Right ventricle myocardium inferior (tissue), 1 donor: ENCODE measurements at regions of chr5 and their contacts with region 1.

Region 1: GRCh38 chr5:42994246-42995151 is 45.6 kb downstream of the ANXA2R start:
- DNase-seq: peak; percentile 90
- ATAC-seq: peak; percentile 78

Region 2: GRCh38 chr5:42950440-42951292 is 43.8 kb before region 1 on chr5:
- intact Hi-C with region 1: loop called (anchors 2 kb)
- DNase-seq: peak; percentile 73
- ATAC-seq: peak; percentile 77

Region 3: DNA sequence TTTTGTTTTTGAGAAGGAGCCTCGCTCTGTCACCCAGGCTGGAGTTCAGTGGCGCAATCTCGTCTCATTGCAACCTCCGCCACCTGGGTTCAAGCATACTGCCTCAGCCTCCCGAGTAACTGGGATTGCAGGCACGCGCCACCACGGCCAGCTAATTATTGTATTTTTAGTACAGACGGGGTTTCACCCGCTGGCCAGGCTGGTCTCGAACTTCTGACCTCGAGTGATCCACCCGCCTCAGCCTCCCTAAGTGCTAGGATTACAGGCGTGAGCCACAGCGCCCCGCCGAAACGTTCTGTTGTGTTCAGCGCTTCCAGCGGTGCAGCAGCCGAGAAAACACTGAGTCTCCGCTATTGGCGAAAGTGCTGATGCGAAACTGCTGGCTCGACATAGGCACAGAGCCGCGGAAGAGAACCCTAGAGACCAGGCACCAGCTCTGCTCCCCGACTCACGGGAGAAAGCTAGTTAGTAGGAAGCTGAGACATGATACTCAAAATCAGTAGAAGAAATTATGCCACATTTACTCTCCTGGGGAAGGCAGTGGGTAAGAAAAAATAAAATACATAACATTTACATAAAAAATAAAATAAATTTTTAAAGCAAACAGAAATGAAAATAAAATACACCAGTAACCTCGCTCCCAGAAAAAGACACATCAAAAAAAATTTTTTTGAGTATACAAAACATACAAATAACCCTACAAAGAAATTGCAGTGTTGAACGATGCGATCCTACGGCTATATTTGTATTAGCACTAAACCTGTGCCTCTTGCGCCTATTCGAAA is 14.1 kb after region 1 on chr5:
- intact Hi-C with region 1: loop called (anchors 2 kb)
- DNase-seq: peak; percentile 91
- ATAC-seq: peak; percentile 87

Region 4: DNA sequence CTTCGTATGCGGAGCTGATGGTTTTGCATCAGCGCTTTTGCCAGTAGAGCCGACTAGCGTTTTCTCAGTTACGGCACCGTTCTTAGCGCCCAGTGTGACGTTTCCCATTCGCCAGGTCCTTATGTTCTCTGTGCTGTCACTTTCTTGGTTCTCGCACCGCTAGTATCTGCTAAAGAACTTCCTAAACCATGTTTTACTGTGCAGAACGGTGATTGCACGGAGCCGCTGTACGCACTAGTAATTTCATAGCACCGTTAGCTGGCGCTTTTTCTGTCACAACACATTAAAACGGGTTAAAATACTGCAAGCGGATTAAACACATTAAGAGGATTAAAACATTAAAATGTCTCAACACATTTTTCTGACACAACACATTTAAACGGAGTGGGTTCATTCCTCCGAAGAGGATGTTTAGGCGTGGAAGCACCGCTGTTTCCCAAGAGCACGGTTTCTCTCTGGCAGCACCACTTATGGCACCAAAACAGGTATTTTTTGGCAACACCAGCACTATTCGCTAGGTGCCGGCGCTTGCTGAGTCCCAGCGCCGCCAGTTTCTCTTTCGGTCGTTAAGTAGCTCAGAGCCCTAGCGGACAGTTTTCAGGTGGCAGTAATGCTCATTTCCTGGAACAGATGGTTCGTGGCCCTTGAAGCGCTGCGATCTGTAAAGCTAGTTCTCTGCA is 25.3 kb after region 1 on chr5:
- intact Hi-C with region 1: loop called (anchors 2 kb)
- DNase-seq: peak; percentile 80
- ATAC-seq: peak; percentile 36

Region 5: GRCh38 chr5:43040287-43041098 is 46.0 kb after region 1 on chr5 and contains the start of gene ANXA2R:
- intact Hi-C with region 1: loop called (anchors 1 kb)
- DNase-seq: peak; percentile 89
- ATAC-seq: peak; percentile 66
- total RNA-seq, gene ANXA2R: 0.84 TPM

Region 6: GRCh38 chr5:43120720-43121564 is 126.4 kb after region 1 on chr5 and contains the start of gene ZNF131:
- intact Hi-C with region 1: loop called (anchors 5 kb)
- DNase-seq: peak; percentile 99
- ATAC-seq: peak; percentile 98
- total RNA-seq, gene ZNF131: 14.6 TPM